ENCODE measurements at regions of chr7 and their contacts with region 1.

Region 1: DNA sequence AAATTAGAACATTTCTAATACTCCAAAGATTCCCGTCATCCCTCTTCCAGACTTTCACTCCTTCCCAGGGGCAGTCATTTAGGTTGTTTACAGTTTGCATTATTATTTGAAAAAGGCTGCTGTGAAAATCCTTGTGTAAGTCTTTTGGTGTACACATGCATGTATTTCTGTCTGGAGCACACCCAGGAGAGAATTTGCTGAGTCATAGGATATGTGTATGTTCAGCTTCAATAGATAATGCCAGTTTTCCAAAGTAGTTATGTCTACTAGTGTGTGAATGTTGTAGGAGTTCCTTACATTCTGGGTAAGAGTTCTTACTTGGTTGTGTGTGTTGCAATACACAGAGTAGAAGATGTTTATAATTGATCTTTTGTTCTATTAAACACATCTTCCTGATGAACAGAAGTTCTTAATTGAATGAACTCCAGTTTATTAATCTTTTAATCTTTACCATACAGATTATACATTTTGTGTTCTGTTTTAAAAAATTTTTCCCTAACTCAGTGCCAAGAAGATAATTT is 25.3 kb downstream of the CROT start:
- DNase-seq: no peak
- ATAC-seq: no peak
- H3K4me3 ChIP-seq: no peak overlapping the region
- H3K4me3 Mint-ChIP-seq: no peak overlapping the region
- H3K27ac ChIP-seq: no peak overlapping the region
- H3K27ac Mint-ChIP-seq: no peak overlapping the region
- H3K4me1 ChIP-seq: peaks cover 7% of the 10 kb centered on the region
- H3K4me1 Mint-ChIP-seq: peaks cover 7% of the 10 kb centered on the region
- H3K27me3 ChIP-seq: no peaks in the 10 kb centered on the region
- H3K27me3 Mint-ChIP-seq: no peaks in the 10 kb centered on the region
- CTCF ChIP-seq: no peak

Region 2: GRCh38 chr7:87328281-87328680 is 42.4 kb before region 1 on chr7:
- CTCF ChIA-PET with region 1: no interaction called
- POLR2A ChIA-PET with region 1: no interaction called
- intact Hi-C with region 1: loop called in 1 of 2 experiments (anchors 10 kb)
- DNase-seq: peak in 1 of 9 experiments; percentile 21
- ATAC-seq: no peak
- H3K4me3 ChIP-seq: no peak overlapping the region
- H3K4me3 Mint-ChIP-seq: no peak overlapping the region
- H3K27ac ChIP-seq: no peak overlapping the region
- H3K27ac Mint-ChIP-seq: no peak overlapping the region
- H3K4me1 ChIP-seq: no peaks in the 10 kb centered on the region
- H3K4me1 Mint-ChIP-seq: no peaks in the 10 kb centered on the region
- H3K27me3 ChIP-seq: no peaks in the 10 kb centered on the region
- H3K27me3 Mint-ChIP-seq: no peaks in the 10 kb centered on the region
- CTCF ChIP-seq: no peak

Region 3: DNA sequence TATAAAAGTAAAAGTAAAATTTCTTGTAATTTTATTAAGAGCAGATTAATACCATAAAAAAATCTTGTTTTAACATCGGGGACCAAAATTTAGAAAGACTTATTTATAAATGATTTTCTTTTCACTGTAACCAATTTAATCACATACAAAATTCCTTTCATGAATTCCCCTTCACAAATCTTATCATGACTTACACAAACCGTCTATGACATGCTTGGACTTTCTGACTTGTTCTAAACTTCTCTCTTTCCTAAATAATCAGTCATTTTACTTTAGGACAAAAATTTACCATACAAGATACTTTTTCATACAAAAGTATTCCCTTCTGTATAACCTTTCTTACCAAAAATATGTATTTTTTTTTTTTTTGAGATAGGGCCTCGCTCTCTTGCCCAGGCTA is 16.0 kb before region 1 on chr7:
- CTCF ChIA-PET with region 1: no interaction called
- POLR2A ChIA-PET with region 1: no interaction called
- intact Hi-C with region 1: no loop called
- DNase-seq: no peak
- ATAC-seq: no peak
- H3K4me3 ChIP-seq: no peak overlapping the region
- H3K4me3 Mint-ChIP-seq: no peak overlapping the region
- H3K27ac ChIP-seq: no peak overlapping the region
- H3K27ac Mint-ChIP-seq: no peak overlapping the region
- H3K4me1 ChIP-seq: no peaks in the 10 kb centered on the region
- H3K4me1 Mint-ChIP-seq: no peaks in the 10 kb centered on the region
- H3K27me3 ChIP-seq: no peaks in the 10 kb centered on the region
- H3K27me3 Mint-ChIP-seq: no peaks in the 10 kb centered on the region
- CTCF ChIP-seq: no peak